ENCODE measurements at regions of chr7 and their contacts with region 1.

Region 1: GRCh38 chr7:42690794-42691639 is 220.9 kb downstream of the C7orf25 start:
- DNase-seq: no peak
- ATAC-seq: peak in 7 of 8 donors; percentile 14 to 71 (median 41)
- H3K4me3 ChIP-seq: no peak overlapping the region
- H3K27ac ChIP-seq: no peak overlapping the region
- H3K4me1 ChIP-seq: peaks cover 0 to 16% (median 0%) of the 10 kb centered on the region in 9 donors
- H3K27me3 ChIP-seq: peaks cover 0 to 5% (median 0%) of the 10 kb centered on the region in 7 donors
- CTCF ChIP-seq: peak in 8 of 9 donors; percentile 9 to 52 (median 43)

Region 2: GRCh38 chr7:41967156-41967555 is 723.9 kb before region 1 on chr7:
- intact Hi-C with region 1: loop called in 5 of 10 experiments (anchors 10 kb)
- DNase-seq: no peak
- ATAC-seq: peak in 1 of 8 donors; percentile 28
- H3K4me3 ChIP-seq: no peak overlapping the region
- H3K27ac ChIP-seq: no peak overlapping the region
- H3K4me1 ChIP-seq: no peaks in the 10 kb centered on the region
- H3K27me3 ChIP-seq: peaks cover 0 to 2% (median 0%) of the 10 kb centered on the region in 7 donors
- CTCF ChIP-seq: no peak

Region 3: DNA sequence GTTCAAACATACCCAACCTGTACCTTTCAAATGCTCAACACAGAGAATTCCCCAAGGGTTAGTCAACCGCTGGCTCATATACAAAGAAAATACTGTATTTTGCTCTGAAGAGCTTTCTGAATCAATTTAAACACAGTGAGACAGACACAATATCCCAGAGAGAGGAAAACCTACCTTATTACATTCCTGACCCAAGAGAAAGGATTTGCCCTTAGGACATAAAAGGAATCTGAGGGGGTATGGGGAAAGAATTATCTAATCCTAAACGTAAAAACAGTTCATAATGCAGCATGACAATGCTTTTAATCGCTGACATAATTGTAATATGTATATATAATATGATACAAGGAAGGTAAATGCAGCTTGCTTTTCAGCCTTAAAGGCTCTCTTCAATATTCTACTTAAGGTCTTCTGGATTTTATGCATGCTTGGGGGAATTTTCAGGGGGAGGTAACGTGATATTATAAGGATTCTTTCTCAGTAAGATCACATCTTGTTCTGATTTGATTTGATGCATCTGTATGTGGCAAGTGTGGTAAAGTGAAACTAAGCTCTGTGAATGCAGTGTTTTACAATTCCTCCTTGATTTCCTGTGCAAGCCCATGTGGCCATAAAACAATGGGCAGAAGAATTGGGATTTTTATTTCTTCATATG is 694.5 kb before region 1 on chr7:
- intact Hi-C with region 1: loop called in 1 of 10 experiments (anchors 10 kb)
- DNase-seq: no peak
- ATAC-seq: no peak
- H3K4me3 ChIP-seq: no peak overlapping the region
- H3K27ac ChIP-seq: no peak overlapping the region
- H3K4me1 ChIP-seq: peaks cover 0 to 24% (median 5%) of the 10 kb centered on the region in 9 donors
- H3K27me3 ChIP-seq: no peaks in the 10 kb centered on the region
- CTCF ChIP-seq: no peak

Region 4: DNA sequence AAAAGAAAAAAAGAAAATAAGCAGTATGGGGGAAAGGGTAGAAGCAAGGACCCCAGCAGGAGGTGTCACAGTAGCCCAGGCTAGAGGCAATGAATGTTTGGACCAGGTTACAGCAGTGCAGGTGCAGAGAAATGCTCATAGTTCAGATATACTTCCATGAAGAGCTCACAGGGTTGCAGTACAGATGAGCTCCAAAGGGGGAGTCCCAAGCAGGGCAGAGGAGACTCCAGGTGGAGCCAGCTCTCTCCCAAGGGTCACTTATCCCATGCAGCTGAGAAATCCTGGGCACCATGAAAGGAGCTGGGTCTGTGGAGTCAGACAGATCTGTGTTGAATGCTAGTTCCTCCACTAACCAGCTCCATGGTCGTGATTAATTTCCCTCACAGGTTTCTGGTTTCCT is 45.9 kb after region 1 on chr7:
- intact Hi-C with region 1: no loop called
- DNase-seq: no peak
- ATAC-seq: no peak
- H3K4me3 ChIP-seq: no peak overlapping the region
- H3K27ac ChIP-seq: no peak overlapping the region
- H3K4me1 ChIP-seq: peaks cover 0 to 15% (median 0%) of the 10 kb centered on the region in 9 donors
- H3K27me3 ChIP-seq: no peaks in the 10 kb centered on the region
- CTCF ChIP-seq: no peak

Measured in heart right ventricle (tissue), 16 donors.